ENCODE measurements at regions of chr1 and their contacts with region 1.

Region 1: DNA sequence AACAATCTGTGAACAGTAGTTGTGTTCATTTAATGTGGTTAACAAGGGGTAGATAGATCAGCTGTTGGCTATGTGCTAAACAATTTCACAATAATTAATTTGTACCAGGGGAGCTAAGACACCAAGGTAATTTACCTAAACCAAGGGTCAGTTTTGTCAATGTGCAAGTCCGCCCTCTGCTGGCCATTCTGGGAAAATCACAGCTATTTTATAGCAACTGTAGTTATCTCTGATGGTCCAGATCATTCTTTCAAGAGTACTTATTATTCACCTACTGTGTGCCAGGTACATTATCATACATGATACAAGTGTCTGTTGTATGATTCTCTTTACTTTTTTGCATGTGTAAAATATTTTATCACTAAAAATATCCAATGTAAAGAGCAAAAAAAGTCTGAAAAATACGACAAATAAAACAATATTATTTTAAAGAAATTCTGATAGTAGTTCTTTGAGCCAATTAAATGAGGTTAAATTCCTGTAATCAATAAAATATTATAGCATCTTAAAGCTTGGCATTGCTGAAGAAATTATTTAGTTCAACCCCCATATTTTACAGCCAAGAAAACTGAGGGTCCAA is 312.3 kb upstream of the FAM78B start:
- DNase-seq: peak; percentile 32
- ATAC-seq: no peak

Region 2: DNA sequence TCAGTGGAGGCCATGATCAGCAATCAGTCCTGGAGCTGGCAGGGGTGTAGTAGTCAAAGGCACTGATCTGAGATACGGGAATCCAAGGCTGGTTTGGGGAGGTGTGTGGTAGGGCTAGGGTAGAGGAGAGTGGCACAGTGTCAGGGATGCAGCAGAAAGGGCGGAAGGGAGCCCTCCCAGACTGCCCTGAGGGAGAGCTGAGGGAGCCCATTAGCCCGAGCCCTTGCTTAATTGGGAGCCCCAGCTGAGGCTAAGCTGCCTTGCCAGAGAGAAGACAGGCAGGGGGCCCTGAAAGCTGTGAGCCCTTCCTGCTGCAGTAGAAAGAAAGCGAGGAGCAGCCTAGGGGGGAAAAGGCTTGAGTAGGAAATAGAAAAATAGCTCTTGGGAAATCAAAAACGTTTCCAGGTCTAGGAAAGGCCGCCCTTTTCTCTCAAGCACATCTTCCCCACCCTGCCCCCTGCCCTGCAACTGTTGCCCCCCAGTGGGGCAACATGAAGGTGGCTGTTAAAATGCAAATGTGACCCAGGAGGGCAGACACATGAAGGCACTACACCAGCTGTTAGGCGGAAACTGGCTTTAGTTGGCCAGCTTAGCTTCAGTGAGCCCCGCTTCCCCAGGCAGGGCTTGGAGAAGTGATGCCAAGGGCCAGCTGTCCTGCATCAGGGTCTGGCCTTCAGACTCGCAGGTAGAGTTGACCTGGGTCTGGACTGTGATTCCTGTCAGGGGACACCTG is 545.5 kb before region 1 on chr1:
- intact Hi-C with region 1: loop called (anchors 5 kb)
- DNase-seq: no peak
- ATAC-seq: no peak

Region 3: GRCh38 chr1:166527752-166528151 is 48.6 kb after region 1 on chr1:
- intact Hi-C with region 1: no loop called
- DNase-seq: no peak
- ATAC-seq: no peak

Region 4: DNA sequence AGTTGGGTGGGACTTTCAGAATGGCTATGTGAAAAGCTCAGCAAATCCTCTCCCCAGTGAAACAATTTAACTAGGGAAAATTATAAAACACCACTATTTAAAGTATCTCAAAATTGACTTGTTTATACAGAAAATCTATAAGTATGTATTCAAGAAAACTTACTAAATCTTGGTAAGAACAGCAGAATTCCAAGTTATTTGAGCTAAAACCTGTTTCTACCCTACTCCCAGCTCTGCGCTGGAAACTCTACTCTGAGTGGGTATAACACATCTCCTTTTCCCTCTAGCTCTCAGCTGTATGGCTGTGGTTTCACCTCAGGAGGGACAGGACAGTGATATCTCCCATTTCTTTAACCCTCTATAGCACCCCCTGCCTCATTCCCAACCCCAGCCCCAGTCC is 64.9 kb after region 1 on chr1:
- intact Hi-C with region 1: no loop called
- DNase-seq: no peak
- ATAC-seq: no peak